ENCODE measurements at regions of chr9 and their contacts with region 1.

Region 1: GRCh38 chr9:76810377-76810957 is 46.2 kb downstream of the PCA3 start:
- DNase-seq: peak; percentile 54
- ATAC-seq: peak; percentile 87
- H3K4me3 ChIP-seq: no peak overlapping the region
- H3K27ac ChIP-seq: no peak overlapping the region
- H3K4me1 ChIP-seq: no peaks in the 10 kb centered on the region
- H3K27me3 ChIP-seq: no peaks in the 10 kb centered on the region
- CTCF ChIP-seq: peak; percentile 69; the same call in 1 of the 2 replicates

Region 2: GRCh38 chr9:76905791-76906650 is 95.6 kb after region 1 on chr9 and contains the start of gene PRUNE2:
- CTCF ChIA-PET with region 1: no interaction called
- POLR2A ChIA-PET with region 1: no interaction called
- in situ Hi-C with region 1: no loop called
- intact Hi-C with region 1: loop called (anchors 10 kb)
- DNase-seq: no peak
- ATAC-seq: peak; percentile 88
- H3K4me3 ChIP-seq: peak within 1 kb of the TSS; percentile 30 to 40
- H3K27ac ChIP-seq: no peak within 1 kb of the TSS
- H3K4me1 ChIP-seq: no peaks in the 10 kb centered on the region
- H3K27me3 ChIP-seq: peaks cover 12% of the 10 kb centered on the region
- CTCF ChIP-seq: no peak
- total RNA-seq, gene PRUNE2: 0.18 TPM

Region 3: DNA sequence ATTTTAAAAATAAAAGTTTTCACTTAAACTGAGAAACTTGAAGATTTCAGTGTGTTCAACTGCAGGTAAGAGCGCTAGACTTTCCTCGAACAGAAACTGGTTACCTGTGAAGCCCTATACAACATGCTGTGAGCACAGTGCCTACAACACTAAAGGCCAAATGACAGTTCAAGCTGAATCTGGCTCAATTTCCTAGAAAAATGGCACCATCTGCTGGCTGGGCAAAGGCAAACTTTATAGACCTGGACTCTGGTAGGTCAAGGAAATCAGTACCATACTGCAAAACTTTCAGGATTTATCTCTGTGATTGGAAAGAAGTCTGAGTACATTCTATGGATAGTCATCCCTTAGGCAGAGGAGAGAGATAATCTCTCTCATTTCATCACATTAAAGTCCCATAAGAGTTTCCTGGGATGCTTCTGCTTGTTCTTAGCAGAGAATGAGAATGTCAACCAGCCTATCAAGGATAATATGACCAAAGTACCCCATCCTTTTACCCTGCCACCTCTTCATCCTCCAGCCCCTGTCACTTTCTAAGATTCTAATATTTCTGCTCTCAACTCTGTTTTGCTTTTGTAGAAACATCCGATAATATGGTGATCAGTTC is 177.2 kb after region 1 on chr9:
- CTCF ChIA-PET with region 1: interaction called, 8 read pairs
- POLR2A ChIA-PET with region 1: no interaction called
- in situ Hi-C with region 1: no loop called
- intact Hi-C with region 1: loop called (anchors 1 kb)
- DNase-seq: peak; percentile 38
- ATAC-seq: peak; percentile 84
- H3K4me3 ChIP-seq: no peak overlapping the region
- H3K27ac ChIP-seq: no peak overlapping the region
- H3K4me1 ChIP-seq: no peaks in the 10 kb centered on the region
- H3K27me3 ChIP-seq: no peaks in the 10 kb centered on the region
- CTCF ChIP-seq: peak; percentile 61

Region 4: DNA sequence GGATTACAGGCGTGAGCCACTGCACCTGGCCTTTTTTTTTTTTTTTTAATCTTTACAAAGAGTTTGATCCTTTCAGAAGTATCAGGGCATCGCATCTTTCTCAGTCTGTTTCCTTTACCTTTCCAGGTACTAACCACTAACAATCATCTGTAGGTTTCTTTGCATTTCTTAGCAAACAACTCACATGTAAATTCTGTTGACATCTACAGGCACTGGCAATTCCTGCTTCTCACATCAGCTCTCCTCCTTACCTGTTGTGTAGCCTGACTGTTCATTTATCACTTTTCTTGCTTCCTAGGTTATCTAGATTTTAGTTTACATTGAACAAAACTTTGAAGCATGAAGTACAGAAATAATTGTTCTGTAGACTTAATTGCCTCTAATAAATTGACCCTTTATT is 339.4 kb after region 1 on chr9:
- CTCF ChIA-PET with region 1: interaction called, 4 read pairs
- POLR2A ChIA-PET with region 1: no interaction called
- in situ Hi-C with region 1: no loop called
- intact Hi-C with region 1: loop called (anchors 2 kb)
- DNase-seq: no peak
- ATAC-seq: no peak
- H3K4me3 ChIP-seq: no peak overlapping the region
- H3K27ac ChIP-seq: no peak overlapping the region
- H3K4me1 ChIP-seq: no peaks in the 10 kb centered on the region
- H3K27me3 ChIP-seq: no peaks in the 10 kb centered on the region
- CTCF ChIP-seq: no peak

Measured in Panc1 (cell line).